Tibial artery (tissue), 4 donors: ENCODE measurements at regions of chr11 and their contacts with region 1.

Region 1: DNA sequence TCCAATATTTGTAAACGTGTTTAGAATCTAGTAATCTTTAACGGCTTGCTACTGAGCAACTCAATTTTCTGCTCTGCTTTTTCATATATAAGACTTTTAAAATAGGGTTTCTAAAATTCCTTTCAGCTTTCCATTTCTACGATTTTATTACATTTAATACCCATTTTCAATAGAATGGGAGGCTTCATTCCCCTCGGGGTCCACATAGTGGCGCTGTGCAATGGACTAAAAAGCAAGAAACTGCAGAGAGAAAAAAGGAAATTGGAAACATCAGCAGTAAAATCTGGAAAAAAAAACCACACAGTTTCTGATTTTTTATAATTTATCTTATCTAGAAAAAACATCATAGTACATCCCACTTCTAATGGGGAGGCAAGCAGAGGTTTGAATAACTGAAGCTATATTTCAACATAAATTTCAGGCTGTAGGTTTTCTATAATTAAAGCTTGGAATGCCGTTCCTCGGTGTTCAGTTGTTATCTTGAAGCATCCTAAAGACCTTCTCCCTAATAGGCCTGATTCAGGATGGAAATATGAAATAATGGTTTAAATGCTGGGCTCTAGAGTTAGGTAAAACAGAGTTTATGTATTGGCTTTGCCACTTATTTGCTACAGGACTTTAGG is 18.7 kb upstream of the JHY start:
- DNase-seq: peak in 1 of 2 donors; percentile 57
- H3K4me3 ChIP-seq: no peak overlapping the region
- H3K27ac ChIP-seq: no peak overlapping the region
- H3K4me1 ChIP-seq: peaks cover 0 to 3% (median 0%) of the 10 kb centered on the region in 4 donors
- H3K27me3 ChIP-seq: peaks cover 0 to 21% of the 10 kb centered on the region in 2 donors
- CTCF ChIP-seq: peak; percentile 70 to 83

Region 2: DNA sequence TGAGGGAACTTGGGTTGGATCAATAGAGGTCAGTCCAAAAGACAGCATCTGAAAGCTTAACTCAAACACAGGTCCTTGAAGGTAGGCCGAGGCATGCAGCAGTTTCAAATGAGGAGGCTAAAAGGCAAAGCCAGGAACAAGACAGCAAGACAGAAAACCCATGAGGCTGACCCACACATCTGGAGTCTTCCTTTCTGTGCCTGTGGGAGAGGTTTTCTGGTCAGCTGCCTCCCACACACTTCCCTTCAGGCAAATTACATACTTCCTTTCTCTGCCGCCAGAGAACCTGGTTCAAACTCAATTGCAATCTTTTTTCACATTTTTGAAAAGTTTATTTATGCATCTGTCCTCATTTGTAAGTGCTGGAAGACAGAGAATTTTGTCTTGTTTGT is 55.3 kb before region 1 on chr11:
- intact Hi-C with region 1: no loop called
- DNase-seq: no peak
- H3K4me3 ChIP-seq: no peak overlapping the region
- H3K27ac ChIP-seq: peak overlapping the region in 1 of 2 donors; percentile 27
- H3K4me1 ChIP-seq: no peaks in the 10 kb centered on the region
- H3K27me3 ChIP-seq: no peaks in the 10 kb centered on the region
- CTCF ChIP-seq: no peak

Region 3: GRCh38 chr11:123020968-123021367 is 157.2 kb after region 1 on chr11:
- intact Hi-C with region 1: loop called (anchors 5 kb)
- DNase-seq: no peak
- H3K4me3 ChIP-seq: no peak overlapping the region
- H3K27ac ChIP-seq: no peak overlapping the region
- H3K4me1 ChIP-seq: peaks cover 0 to 3% (median 0%) of the 10 kb centered on the region in 4 donors
- H3K27me3 ChIP-seq: peaks cover 0 to 17% of the 10 kb centered on the region in 2 donors
- CTCF ChIP-seq: peak; percentile 16 to 22